GM12878 (cell line): ENCODE measurements at regions of chr4 and their contacts with region 1.

Region 1: DNA sequence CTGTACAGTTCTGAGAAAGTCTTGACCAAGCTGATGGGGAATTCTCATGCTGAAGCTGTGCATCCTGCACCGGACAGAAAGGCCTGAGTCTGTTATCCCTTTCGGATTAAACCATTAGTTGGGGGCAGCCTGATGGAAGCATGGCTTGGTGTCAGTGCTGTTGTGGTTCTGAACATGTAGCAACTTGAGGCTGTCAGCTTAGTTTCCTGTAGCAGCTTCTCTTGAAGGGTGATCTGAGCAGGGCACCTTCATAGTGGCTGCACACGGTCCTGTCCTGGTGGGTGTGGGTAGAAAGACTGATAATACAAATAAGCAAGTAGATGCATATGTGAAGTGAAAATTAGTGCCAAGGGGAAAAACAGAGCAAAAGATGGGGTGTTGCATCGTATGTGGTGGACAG is 11.7 kb downstream of the KIAA0232 start:
- DNase-seq: no peak
- ATAC-seq: peak; percentile 22; the same call in 2 of the 3 replicates
- H3K4me3 ChIP-seq: no peak overlapping the region
- H3K27ac ChIP-seq: no peak overlapping the region
- H3K4me1 ChIP-seq: peaks cover 4% of the 10 kb centered on the region; the same call in 1 of the 2 replicates
- H3K27me3 ChIP-seq: no peaks in the 10 kb centered on the region
- CTCF ChIP-seq: no peak
- EP300 ChIP-seq: no peak
- POLR2A ChIP-seq: no peak
- RAD21 ChIP-seq: no peak

Region 2: DNA sequence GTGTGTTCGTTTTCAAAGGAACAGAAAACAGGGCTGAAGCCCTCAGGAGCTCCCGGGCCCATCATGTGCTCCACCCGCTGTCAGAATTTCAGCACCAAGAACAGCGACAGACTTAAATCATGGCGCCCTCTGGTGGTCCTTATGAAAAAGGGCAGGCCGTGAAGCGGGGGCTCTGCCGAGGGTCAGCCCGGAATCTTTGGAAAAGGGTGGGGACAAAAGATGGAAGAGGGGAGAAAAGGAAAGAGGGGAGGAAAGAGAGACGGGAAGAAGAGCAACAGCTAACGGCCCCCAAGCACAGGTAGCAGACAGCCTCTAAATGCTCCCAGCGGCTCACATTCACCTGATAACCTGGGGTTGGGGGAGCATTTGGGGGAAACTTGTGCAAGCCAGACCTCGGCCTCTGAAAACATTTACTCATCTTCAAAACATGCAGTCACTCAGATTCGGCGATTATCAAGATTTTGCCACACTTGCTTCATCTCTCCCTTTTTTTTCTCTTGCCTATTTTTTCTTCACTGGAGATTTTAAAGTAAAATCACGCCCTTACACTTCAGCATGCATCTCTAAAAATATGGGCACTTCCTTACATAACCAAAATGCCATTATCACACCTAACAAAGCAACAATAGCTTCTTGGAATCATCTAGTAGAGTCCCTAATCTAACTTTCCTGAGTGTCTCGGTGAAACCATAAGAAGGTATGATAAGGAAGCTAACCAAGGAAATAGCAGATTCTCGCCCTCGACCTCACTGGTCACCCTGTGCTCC is 247.3 kb before region 1 on chr4:
- CTCF ChIA-PET with region 1: no interaction called
- POLR2A ChIA-PET with region 1: no interaction called
- RAD21 ChIA-PET with region 1: no interaction called
- SMC1A ChIA-PET with region 1: no interaction called
- in situ Hi-C with region 1: no loop called
- intact Hi-C with region 1: no loop called
- DNase-seq: no peak
- ATAC-seq: peak; percentile 83
- H3K4me3 ChIP-seq: no peak overlapping the region
- H3K27ac ChIP-seq: no peak overlapping the region
- H3K4me1 ChIP-seq: no peaks in the 10 kb centered on the region
- H3K27me3 ChIP-seq: no peaks in the 10 kb centered on the region
- CTCF ChIP-seq: peak; percentile 86 to 87 (median 87)
- EP300 ChIP-seq: no peak
- POLR2A ChIP-seq: no peak
- RAD21 ChIP-seq: peak; percentile 62

Region 3: GRCh38 chr4:6658597-6659075 is 135.6 kb before region 1 on chr4:
- CTCF ChIA-PET with region 1: no interaction called
- POLR2A ChIA-PET with region 1: no interaction called
- RAD21 ChIA-PET with region 1: no interaction called
- SMC1A ChIA-PET with region 1: no interaction called
- in situ Hi-C with region 1: no loop called
- intact Hi-C with region 1: no loop called
- DNase-seq: no peak
- ATAC-seq: peak; percentile 85
- H3K4me3 ChIP-seq: no peak overlapping the region
- H3K27ac ChIP-seq: no peak overlapping the region
- H3K4me1 ChIP-seq: no peaks in the 10 kb centered on the region
- H3K27me3 ChIP-seq: peaks cover 11 to 14% of the 10 kb centered on the region in 2 experiments
- CTCF ChIP-seq: no peak
- EP300 ChIP-seq: no peak
- POLR2A ChIP-seq: no peak
- RAD21 ChIP-seq: no peak

Region 4: GRCh38 chr4:6746631-6747293 is 47.4 kb before region 1 on chr4:
- CTCF ChIA-PET with region 1: no interaction called
- POLR2A ChIA-PET with region 1: interaction called, 10 read pairs
- RAD21 ChIA-PET with region 1: no interaction called
- SMC1A ChIA-PET with region 1: no interaction called
- in situ Hi-C with region 1: no loop called
- intact Hi-C with region 1: no loop called
- DNase-seq: no peak
- ATAC-seq: no peak; the same call in 1 of the 3 replicates
- H3K4me3 ChIP-seq: no peak overlapping the region
- H3K27ac ChIP-seq: no peak overlapping the region
- H3K4me1 ChIP-seq: peaks cover 10% of the 10 kb centered on the region
- H3K27me3 ChIP-seq: no peaks in the 10 kb centered on the region
- CTCF ChIP-seq: no peak
- EP300 ChIP-seq: no peak
- POLR2A ChIP-seq: no peak
- RAD21 ChIP-seq: no peak